MCF 10A (cell line): ENCODE measurements at regions of chr1 and their contacts with region 1.

Region 1: GRCh38 chr1:150067184-150068036 is at the start of gene VPS45:
- DNase-seq: peak; percentile 95
- H3K4me3 Mint-ChIP-seq: peak within 1 kb of the TSS; percentile 91
- H3K27ac Mint-ChIP-seq: peak within 1 kb of the TSS; percentile 87
- H3K4me1 Mint-ChIP-seq: peaks cover 33% of the 10 kb centered on the region
- H3K27me3 Mint-ChIP-seq: no peaks in the 10 kb centered on the region
- CTCF ChIP-seq: no peak
- total RNA-seq, gene VPS45: 35.1 and 55.1 TPM in 2 replicates

Region 2: DNA sequence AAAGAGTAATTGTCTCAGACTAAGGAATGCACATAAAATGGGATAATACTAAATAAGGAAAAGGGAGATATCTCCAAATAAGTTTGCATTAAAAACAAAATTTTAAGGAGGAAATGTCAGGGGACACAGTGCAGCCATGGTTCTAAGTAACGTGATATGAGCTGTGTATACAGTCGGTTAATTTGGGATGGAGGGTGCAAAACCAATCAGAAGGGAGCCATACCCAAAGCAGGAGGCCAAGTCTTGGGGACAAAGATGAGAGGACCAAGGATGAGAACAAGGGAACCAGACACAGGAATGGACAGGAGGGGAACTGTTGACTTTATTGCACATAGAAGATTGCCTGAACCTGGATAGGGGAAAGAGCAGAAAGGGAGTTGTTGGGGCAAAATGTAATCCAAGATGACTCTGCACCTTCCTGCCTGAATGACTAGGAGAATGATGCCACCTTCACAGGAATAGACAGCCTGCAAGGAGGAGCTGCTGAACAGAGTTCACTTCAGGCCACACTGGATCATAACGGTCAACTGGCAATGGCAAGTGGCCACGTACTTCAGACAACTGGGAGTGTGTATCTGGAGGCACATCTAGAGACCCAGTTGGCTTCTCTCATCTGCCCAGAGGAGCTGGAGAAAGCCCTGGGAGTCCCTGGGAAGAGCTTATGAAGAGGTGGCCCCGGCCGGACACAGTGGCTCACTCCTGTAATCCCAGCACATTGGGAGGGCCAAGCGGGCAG is 190.0 kb before region 1 on chr1:
- CTCF ChIA-PET with region 1: no interaction called
- POLR2A ChIA-PET with region 1: no interaction called
- intact Hi-C with region 1: no loop called
- DNase-seq: no peak
- H3K4me3 Mint-ChIP-seq: no peak overlapping the region
- H3K27ac Mint-ChIP-seq: no peak overlapping the region
- H3K4me1 Mint-ChIP-seq: no peaks in the 10 kb centered on the region
- H3K27me3 Mint-ChIP-seq: no peaks in the 10 kb centered on the region
- CTCF ChIP-seq: no peak

Region 3: GRCh38 chr1:149917571-149918144 is 149.8 kb before region 1 on chr1 and contains the start of gene SV2A:
- CTCF ChIA-PET with region 1: no interaction called
- POLR2A ChIA-PET with region 1: no interaction called
- intact Hi-C with region 1: no loop called
- DNase-seq: no peak
- H3K4me3 Mint-ChIP-seq: no peak within 1 kb of the TSS
- H3K27ac Mint-ChIP-seq: no peak within 1 kb of the TSS
- H3K4me1 Mint-ChIP-seq: peaks cover 12% of the 10 kb centered on the region
- H3K27me3 Mint-ChIP-seq: peaks cover 10% of the 10 kb centered on the region
- CTCF ChIP-seq: no peak
- total RNA-seq, gene SV2A: 0.12 TPM in 1 of 2 replicates, not detected in the other

Region 4: DNA sequence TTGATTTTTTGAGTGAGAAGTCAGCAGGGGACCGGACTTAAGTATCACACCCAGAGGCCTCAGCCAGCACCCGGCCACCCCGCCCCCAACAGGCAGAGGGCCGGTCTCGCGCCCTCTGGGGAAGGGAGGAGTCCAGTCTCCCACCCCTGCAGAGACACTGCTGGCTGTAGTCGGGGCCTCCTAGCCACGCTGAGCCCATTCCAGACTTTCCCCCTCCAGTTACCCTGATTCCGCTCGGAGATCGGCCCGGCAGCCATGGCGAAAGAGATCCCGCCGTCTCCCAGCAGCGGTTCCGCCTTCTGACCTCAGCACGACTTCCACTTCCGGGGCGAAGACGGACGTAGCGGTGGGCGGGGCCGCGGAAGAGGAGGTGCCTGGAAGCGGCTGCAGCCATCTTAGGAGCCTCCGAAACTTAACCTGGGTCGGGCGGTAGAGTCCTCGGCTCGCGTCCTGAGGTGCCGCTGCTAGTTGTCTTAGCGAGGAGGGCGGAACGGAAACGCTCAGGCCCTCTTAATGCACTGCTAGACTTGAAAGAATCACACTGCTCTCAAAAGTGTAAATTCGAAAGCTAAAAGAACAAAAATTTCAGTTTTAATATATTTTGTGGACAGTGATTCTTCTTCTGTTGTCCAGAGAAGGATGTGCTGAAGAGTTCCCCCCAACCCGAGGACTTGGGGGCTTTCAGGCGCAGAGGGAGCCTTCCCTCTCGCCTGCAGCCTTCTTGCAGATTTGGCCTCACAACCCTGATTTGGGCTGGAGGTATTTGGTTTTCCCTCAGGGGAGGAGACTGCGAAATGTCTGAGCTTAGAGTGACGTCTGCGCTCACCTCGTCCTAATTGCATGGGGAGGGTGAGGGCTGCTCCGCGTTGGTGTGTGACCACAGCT is 139.7 kb before region 1 on chr1 and contains the start of gene SF3B4:
- CTCF ChIA-PET with region 1: interaction called, 3 read pairs
- POLR2A ChIA-PET with region 1: interaction called, 23 read pairs
- intact Hi-C with region 1: no loop called
- DNase-seq: peak; percentile 98
- H3K4me3 Mint-ChIP-seq: peak within 1 kb of the TSS; percentile 99
- H3K27ac Mint-ChIP-seq: peak within 1 kb of the TSS; percentile 87
- H3K4me1 Mint-ChIP-seq: peaks cover 71% of the 10 kb centered on the region
- H3K27me3 Mint-ChIP-seq: no peaks in the 10 kb centered on the region
- CTCF ChIP-seq: no peak
- total RNA-seq, gene SF3B4: 79.2 and 99.2 TPM in 2 replicates

Region 5: GRCh38 chr1:149949911-149950310 is 117.5 kb before region 1 on chr1:
- CTCF ChIA-PET with region 1: no interaction called
- POLR2A ChIA-PET with region 1: no interaction called
- intact Hi-C with region 1: no loop called
- DNase-seq: no peak
- H3K4me3 Mint-ChIP-seq: no peak overlapping the region
- H3K27ac Mint-ChIP-seq: peak overlapping the region; percentile 20
- H3K4me1 Mint-ChIP-seq: no peaks in the 10 kb centered on the region
- H3K27me3 Mint-ChIP-seq: no peaks in the 10 kb centered on the region
- CTCF ChIP-seq: no peak

Region 6: DNA sequence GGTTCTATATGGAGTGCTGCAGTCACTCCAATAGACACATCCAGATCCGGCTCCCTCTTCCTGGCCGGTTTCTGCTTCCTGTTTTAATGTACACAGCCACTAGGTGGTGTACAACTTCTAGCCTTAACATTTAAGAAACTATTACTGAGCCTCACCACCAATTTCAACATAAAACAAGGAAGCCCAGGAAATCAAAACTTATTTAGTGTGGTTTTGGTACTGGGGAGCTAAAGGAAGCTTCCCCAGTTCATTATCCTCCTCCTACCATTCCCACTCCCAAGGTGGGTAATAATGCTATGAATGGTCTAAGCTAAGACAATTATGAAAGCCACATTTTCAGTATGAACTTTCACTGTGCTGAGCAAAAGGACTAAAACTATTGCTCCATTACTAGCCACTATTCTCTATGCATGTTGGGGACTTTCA is 105.3 kb before region 1 on chr1:
- CTCF ChIA-PET with region 1: interaction called, 17 read pairs
- POLR2A ChIA-PET with region 1: interaction called, 28 read pairs
- intact Hi-C with region 1: loop called (anchors 1 kb)
- DNase-seq: peak; percentile 85
- H3K4me3 Mint-ChIP-seq: no peak overlapping the region
- H3K27ac Mint-ChIP-seq: peak overlapping the region; percentile 33
- H3K4me1 Mint-ChIP-seq: peaks cover 22% of the 10 kb centered on the region
- H3K27me3 Mint-ChIP-seq: no peaks in the 10 kb centered on the region
- CTCF ChIP-seq: peak; percentile 88

Region 7: DNA sequence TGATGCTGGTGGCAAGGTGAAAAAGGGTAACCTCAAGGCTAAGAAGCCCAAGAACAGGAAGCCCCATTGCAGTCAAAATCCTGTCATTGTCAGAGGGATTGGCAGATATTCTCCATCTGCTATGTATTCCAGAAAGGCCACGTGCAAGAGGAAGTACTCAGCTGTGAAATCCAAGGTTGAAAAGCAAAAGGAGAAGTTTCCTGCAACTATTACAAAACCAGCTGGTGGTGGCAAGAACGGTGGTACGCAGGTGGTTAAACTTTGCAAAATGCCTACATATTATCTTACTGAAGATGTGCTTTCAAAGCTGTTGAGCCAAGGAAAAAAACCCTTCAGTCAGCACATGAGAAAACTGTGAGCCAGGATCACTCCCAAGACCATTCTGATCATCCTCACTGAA is 13.5 kb before region 1 on chr1:
- CTCF ChIA-PET with region 1: interaction called, 10 read pairs
- POLR2A ChIA-PET with region 1: interaction called, 34 read pairs
- intact Hi-C with region 1: no loop called
- DNase-seq: no peak
- H3K4me3 Mint-ChIP-seq: no peak overlapping the region
- H3K27ac Mint-ChIP-seq: no peak overlapping the region
- H3K4me1 Mint-ChIP-seq: peaks cover 7% of the 10 kb centered on the region
- H3K27me3 Mint-ChIP-seq: no peaks in the 10 kb centered on the region
- CTCF ChIP-seq: no peak

Region 8: DNA sequence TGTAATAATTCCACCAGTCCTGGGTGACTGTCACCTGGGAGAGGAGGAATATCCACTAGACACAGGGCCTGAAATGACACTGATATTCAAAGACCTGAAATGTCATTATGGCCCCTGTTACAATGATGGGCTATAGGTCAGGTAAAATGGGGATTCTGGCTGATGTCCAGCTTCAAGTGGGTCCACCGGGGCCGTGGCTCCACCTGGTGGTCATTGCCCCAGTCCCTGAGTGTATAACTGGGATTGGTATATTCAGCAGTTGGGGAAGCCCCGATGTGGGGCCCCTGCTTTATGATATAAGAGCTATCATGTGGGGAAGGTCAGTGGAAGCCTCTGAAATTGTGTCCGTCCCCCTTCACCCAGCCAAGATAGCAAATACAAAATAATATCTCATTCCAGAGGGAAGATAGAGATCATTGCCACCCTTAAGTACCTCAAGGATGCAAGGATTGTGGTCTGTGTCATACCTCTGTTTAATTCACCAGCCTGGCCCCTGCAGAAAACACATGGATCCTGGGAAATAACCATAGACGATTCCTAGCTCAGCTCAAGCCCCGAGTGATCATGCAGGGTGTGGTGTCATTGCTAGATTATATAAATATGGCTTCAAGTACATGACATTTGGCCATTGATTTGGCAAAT is 101.7 kb after region 1 on chr1:
- CTCF ChIA-PET with region 1: interaction called, 90 read pairs
- POLR2A ChIA-PET with region 1: interaction called, 5 read pairs
- intact Hi-C with region 1: no loop called
- DNase-seq: peak; percentile 82
- H3K4me3 Mint-ChIP-seq: no peak overlapping the region
- H3K27ac Mint-ChIP-seq: no peak overlapping the region
- H3K4me1 Mint-ChIP-seq: no peaks in the 10 kb centered on the region
- H3K27me3 Mint-ChIP-seq: no peaks in the 10 kb centered on the region
- CTCF ChIP-seq: peak; percentile 88

Region 9: GRCh38 chr1:150235852-150236613 is 168.6 kb after region 1 on chr1 and contains the start of gene ANP32E:
- CTCF ChIA-PET with region 1: no interaction called
- POLR2A ChIA-PET with region 1: interaction called, 17 read pairs
- intact Hi-C with region 1: no loop called
- DNase-seq: peak; percentile 100
- H3K4me3 Mint-ChIP-seq: no peak within 1 kb of the TSS
- H3K27ac Mint-ChIP-seq: no peak within 1 kb of the TSS
- H3K4me1 Mint-ChIP-seq: peaks cover 11% of the 10 kb centered on the region
- H3K27me3 Mint-ChIP-seq: no peaks in the 10 kb centered on the region
- CTCF ChIP-seq: no peak
- total RNA-seq, gene ANP32E: 56.5 and 67.3 TPM in 2 replicates